Activated T-helper 2 cell treated with anti-CD3 and anti-CD28 coated beads, Interferon-gamma antibody, Interleukin-2, Interleukin-4, amounts not matched to agents 10 μg/mL and 5 μg/mL and 100 μg/mL, durations not matched to agents 14 hours and 24 hours and 36 hours (primary cell): ENCODE measurements at regions of chr20 and their contacts with region 1.

Region 1: GRCh38 chr20:35443003-35443402 is 5.0 kb upstream of the GDF5 start:
- DNase-seq: no peak
- H3K4me3 Mint-ChIP-seq: no peak overlapping the region
- H3K27ac Mint-ChIP-seq: no peak overlapping the region
- H3K4me1 Mint-ChIP-seq: peaks cover 6% of the 10 kb centered on the region
- H3K27me3 Mint-ChIP-seq: peaks cover 11% of the 10 kb centered on the region

Region 2: GRCh38 chr20:35303735-35304491 is 139.1 kb before region 1 on chr20:
- intact Hi-C with region 1: loop called (anchors 1 kb)
- DNase-seq: peak; percentile 76
- H3K4me3 Mint-ChIP-seq: no peak overlapping the region
- H3K27ac Mint-ChIP-seq: peak overlapping the region; percentile 74
- H3K4me1 Mint-ChIP-seq: peaks cover 29% of the 10 kb centered on the region
- H3K27me3 Mint-ChIP-seq: no peaks in the 10 kb centered on the region

Region 3: DNA sequence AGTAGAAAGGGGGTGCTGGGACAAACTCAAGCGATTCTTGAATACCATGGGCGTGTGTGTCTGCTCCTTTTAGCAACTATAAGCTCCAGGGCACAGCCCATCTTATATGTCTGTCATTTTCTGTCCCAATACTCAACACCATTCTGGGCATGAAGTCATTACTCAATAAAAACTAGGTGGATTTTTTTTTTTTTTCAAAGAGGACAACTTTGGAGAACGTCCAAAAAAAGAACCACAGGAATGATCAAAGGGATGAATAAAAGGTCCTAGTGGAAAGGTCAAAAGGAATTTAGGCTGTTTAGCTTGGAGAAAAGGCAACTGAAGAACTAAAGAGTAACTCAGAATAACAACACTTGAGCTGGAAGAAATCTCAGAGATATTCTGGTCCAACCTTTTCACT is 55.7 kb before region 1 on chr20:
- intact Hi-C with region 1: no loop called
- DNase-seq: no peak
- H3K4me3 Mint-ChIP-seq: no peak overlapping the region
- H3K27ac Mint-ChIP-seq: no peak overlapping the region
- H3K4me1 Mint-ChIP-seq: peaks cover 5% of the 10 kb centered on the region
- H3K27me3 Mint-ChIP-seq: no peaks in the 10 kb centered on the region